CD4-positive, alpha-beta memory T cell (primary cell): ENCODE measurements at regions of chr1 and their contacts with region 1.

Region 1: DNA sequence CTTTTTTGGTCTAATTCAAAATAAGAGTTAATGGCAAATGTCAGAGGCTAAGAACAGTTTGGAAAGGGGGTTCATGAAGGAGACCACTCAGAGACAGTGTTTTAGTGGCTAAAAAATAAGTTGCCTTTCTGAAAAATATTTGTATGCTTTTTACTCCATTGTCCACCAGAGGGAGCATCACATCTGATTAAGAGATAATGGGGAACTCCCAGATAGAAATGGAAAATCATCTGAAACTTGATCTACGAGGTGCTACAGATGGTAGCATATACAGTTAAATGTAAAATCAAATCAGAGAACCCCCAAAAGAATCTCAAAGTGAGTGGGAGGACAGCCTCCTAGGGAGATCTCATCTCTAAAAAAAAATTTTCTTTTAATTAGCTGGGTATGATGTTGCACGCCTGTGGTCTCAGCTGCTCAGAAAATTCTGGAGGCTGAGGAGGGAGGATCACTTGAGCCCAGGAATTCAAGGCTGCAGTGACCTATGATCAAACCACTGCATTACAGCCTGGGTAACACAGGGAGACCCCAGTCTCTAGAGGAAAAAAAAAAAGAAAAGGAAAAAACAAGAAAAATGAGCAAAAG is 9.7 kb downstream of the SMYD3 start:
- DNase-seq: peak in 4 of 5 donors; percentile 59 to 71 (median 68)
- H3K4me3 ChIP-seq: no peak overlapping the region
- H3K4me3 Mint-ChIP-seq: no peak overlapping the region
- H3K27ac ChIP-seq: no peak overlapping the region
- H3K27ac Mint-ChIP-seq: peak overlapping the region in 3 of 7 donors; percentile 26 to 79 (median 60)
- H3K4me1 ChIP-seq: no peaks in the 10 kb centered on the region
- H3K4me1 Mint-ChIP-seq: peaks cover 13 to 27% (median 15%) of the 10 kb centered on the region in 4 donors
- H3K27me3 ChIP-seq: no peaks in the 10 kb centered on the region
- H3K27me3 Mint-ChIP-seq: no peaks in the 10 kb centered on the region

Region 2: DNA sequence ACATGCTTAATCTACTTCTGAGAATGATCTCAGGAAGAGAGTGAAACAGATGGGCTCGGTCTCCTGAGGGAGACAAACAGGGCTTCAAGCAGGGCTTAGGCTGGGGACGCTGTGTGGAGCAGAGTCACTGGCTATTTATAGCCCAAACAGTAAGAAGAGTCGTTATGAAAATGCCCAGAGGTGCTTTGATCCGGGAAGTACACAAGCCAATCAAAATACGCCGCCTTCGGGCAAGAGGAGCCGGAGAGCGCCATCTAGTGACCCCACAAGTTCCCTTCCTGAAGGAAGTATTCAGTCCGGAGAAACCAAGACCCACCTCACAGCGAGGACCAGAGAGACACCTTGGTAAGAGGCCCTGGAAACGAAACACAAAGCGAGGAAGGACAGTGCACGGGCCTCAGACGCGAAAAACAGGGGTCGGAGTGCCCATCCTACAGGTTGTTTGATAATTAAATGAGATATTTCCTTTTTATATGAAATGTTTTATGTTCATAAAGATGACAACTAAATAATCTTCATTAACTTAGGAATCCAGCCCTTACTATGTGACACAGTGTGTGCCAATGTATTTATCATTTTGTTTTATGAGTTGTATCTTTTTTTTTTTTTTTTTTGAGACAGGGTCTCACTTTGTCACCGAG is 201.8 kb after region 1 on chr1:
- CTCF ChIA-PET with region 1: interaction called, 12 read pairs
- POLR2A ChIA-PET with region 1: no interaction called
- intact Hi-C with region 1: loop called (anchors 1 kb)
- DNase-seq: peak; percentile 74 to 80 (median 77)
- H3K4me3 ChIP-seq: peak overlapping the region in 1 of 2 donors; percentile 4
- H3K4me3 Mint-ChIP-seq: peak overlapping the region; percentile 38 to 85 (median 74)
- H3K27ac ChIP-seq: no peak overlapping the region
- H3K27ac Mint-ChIP-seq: peak overlapping the region in 5 of 7 donors; percentile 11 to 53 (median 31)
- H3K4me1 ChIP-seq: peaks cover 10% of the 10 kb centered on the region
- H3K4me1 Mint-ChIP-seq: peaks cover 3 to 13% (median 6%) of the 10 kb centered on the region in 4 donors
- H3K27me3 ChIP-seq: no peaks in the 10 kb centered on the region
- H3K27me3 Mint-ChIP-seq: no peaks in the 10 kb centered on the region

Region 3: GRCh38 chr1:246753670-246754535 is 256.5 kb after region 1 on chr1:
- CTCF ChIA-PET with region 1: interaction called, 4 read pairs
- POLR2A ChIA-PET with region 1: no interaction called
- intact Hi-C with region 1: loop called (anchors 1 kb)
- DNase-seq: peak; percentile 27 to 49 (median 37)
- H3K4me3 ChIP-seq: no peak overlapping the region
- H3K4me3 Mint-ChIP-seq: no peak overlapping the region
- H3K27ac ChIP-seq: no peak overlapping the region
- H3K27ac Mint-ChIP-seq: peak overlapping the region in 1 of 7 donors; percentile 25
- H3K4me1 ChIP-seq: no peaks in the 10 kb centered on the region
- H3K4me1 Mint-ChIP-seq: no peaks in the 10 kb centered on the region
- H3K27me3 ChIP-seq: no peaks in the 10 kb centered on the region
- H3K27me3 Mint-ChIP-seq: no peaks in the 10 kb centered on the region

Region 4: DNA sequence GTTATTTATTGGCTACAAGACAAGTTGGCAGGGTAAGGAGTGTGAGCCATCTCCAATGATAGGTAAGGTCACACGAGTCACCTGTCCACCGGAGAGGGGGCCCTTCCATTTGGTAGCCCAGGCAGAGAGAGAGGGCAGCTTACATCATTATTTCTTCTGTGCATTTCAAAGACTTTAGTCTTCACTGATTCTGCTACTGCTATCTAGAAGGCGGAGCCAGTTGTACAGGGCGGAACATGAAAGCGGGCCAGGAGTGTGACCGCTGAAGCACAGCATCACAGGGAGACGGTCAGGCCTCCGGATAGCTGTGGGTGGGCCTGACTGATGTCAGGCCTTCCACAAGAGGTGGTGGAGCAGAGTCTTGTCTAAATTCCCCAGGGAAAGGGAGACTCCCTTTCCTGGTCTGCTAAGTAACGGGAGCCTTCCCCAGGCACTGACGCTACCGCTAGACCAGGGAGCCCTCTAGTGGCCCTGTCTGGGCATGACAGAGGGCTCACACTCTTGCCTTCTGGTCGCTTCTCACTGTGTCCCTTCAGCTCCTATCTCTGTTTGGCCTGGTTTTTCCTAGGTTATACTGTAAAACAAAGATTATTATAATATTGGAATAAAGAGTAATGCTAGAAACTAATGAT is 473.8 kb after region 1 on chr1:
- CTCF ChIA-PET with region 1: no interaction called
- POLR2A ChIA-PET with region 1: no interaction called
- intact Hi-C with region 1: loop called (anchors 5 kb)
- DNase-seq: peak in 4 of 5 donors; percentile 9 to 31 (median 25)
- H3K4me3 ChIP-seq: no peak overlapping the region
- H3K4me3 Mint-ChIP-seq: peak overlapping the region in 1 of 8 donors; percentile 55
- H3K27ac ChIP-seq: no peak overlapping the region
- H3K27ac Mint-ChIP-seq: no peak overlapping the region
- H3K4me1 ChIP-seq: no peaks in the 10 kb centered on the region
- H3K4me1 Mint-ChIP-seq: no peaks in the 10 kb centered on the region
- H3K27me3 ChIP-seq: no peaks in the 10 kb centered on the region
- H3K27me3 Mint-ChIP-seq: peaks cover 0 to 3% of the 10 kb centered on the region in 2 donors

Region 5: GRCh38 chr1:247557926-247558674 is 1060.7 kb after region 1 on chr1:
- CTCF ChIA-PET with region 1: no interaction called
- POLR2A ChIA-PET with region 1: no interaction called
- intact Hi-C with region 1: no loop called
- DNase-seq: no peak
- H3K4me3 ChIP-seq: no peak overlapping the region
- H3K4me3 Mint-ChIP-seq: no peak overlapping the region
- H3K27ac ChIP-seq: no peak overlapping the region
- H3K27ac Mint-ChIP-seq: no peak overlapping the region
- H3K4me1 ChIP-seq: no peaks in the 10 kb centered on the region
- H3K4me1 Mint-ChIP-seq: no peaks in the 10 kb centered on the region
- H3K27me3 ChIP-seq: no peaks in the 10 kb centered on the region
- H3K27me3 Mint-ChIP-seq: peaks cover 2% of the 10 kb centered on the region in 2 donors